Activated naive CD8-positive, alpha-beta T cell treated with anti-CD3 and anti-CD28 coated beads, Interleukin-2, amount 10 ng/mL, durations not matched to agents 7 days and 5 days (primary cell): ENCODE measurements at regions of chr13 and their contacts with region 1.

Region 1: DNA sequence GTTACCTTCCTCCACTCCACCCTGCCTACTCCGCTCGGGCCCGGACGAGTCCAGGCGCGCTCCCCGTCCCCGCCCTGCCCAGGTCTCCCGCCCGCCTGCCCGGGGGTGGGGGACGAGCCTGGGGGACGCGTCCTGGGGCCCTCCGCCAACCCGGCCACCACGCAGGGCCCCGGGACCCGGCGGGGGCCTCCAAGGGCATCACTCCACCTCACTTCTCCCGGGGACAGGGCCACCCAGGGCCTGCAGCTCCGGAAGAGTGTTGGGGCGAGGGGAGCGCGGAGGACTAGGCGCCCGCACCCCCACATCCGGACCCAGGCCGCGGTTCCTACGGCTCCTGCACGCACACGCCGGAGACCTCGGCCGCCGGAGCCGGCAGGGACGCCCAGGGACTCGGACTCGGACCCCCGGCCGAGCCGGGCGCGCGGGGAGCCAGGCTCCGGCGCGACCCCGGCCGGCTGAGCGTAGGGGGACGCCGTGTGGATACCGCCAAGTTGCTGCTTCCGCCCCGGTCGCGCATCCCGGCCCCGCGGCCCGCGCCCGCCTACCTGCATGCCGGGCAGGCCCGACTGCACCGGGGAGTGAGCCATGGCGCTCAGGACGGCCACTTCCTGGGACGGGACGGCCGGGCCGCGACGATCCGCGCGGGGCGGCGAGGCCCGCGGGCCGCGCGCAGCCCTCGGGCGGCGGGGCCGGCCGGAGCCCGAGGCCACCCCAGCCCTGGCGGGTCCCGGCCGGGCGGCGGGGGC is 534 bp downstream of the STK24 start:
- DNase-seq: peak; percentile 78
- ATAC-seq: peak; percentile 55
- H3K4me3 Mint-ChIP-seq: peak overlapping the region; percentile 97
- H3K27ac Mint-ChIP-seq: peak overlapping the region; percentile 93
- H3K4me1 Mint-ChIP-seq: peaks cover 38% of the 10 kb centered on the region
- H3K27me3 Mint-ChIP-seq: no peaks in the 10 kb centered on the region

Region 2: DNA sequence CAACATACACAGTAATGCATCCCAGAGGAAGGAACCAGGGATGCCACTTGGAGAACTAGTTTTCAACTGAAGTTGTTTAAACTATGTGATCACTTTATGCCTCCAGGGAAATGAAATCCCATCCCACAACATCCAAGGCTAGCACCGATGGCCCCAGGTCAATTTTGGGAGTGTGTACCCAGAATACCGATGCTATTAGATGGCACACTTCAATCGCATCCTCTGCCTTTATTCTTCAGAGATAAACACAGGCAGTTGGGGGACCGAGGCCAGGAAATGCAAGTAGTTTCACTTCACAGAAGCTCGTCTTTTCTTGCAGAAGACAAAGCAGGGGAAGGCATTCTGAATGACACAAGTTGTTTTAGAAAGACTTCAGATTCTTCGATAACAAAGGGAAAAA is 13.3 kb before region 1 on chr13:
- POLR2A ChIA-PET with region 1: interaction called, 14 read pairs
- DNase-seq: no peak
- ATAC-seq: peak; percentile 77
- H3K4me3 Mint-ChIP-seq: peak overlapping the region; percentile 81
- H3K27ac Mint-ChIP-seq: peak overlapping the region; percentile 86
- H3K4me1 Mint-ChIP-seq: peaks cover 73% of the 10 kb centered on the region
- H3K27me3 Mint-ChIP-seq: no peaks in the 10 kb centered on the region